ENCODE measurements at regions of chr2 and their contacts with region 1.

Region 1: DNA sequence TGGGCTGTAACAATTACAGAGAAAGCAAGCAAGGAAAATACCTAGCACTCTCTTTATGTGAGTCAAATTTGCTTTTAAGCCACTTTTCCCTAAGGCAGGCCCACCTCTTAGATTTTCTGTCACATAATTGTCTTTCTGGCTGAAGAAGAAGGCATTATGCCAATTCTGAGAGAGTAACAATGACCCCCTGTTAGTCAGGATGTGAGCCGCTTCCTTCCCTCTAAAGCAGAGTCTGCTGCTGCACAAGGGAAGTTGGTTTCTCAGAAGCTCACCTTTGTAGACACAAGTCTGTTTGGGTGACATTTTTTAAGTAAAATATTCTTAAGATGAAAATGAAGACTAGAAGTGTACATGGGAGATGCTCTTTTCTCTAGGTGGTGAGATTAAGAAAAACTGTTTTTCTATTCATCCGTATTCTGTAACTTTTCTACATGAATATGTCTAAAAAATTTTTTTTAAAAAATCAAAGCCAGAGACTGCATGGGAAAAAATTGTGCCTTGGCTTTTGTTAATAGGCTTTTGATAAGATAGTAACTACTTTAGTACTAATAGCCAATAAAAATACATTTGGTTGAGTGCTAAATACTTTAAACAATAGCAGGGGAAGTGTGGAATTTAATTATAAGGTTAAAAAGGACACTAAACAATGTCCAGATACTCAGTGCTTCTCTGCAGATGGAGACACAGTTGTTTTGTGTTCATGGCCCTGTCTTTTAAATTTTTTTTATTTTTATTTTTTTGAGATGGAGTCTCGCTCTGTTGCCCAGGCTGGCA is 33.4 kb upstream of the VPS54 start:
- DNase-seq: no peak
- ATAC-seq: peak; percentile 71 to 92
- H3K4me3 ChIP-seq: no peak overlapping the region
- H3K27ac ChIP-seq: no peak overlapping the region
- H3K4me1 ChIP-seq: no peaks in the 10 kb centered on the region
- H3K27me3 ChIP-seq: no peaks in the 10 kb centered on the region

Region 2: GRCh38 chr2:63772061-63772460 is 280.6 kb before region 1 on chr2:
- intact Hi-C with region 1: no loop called
- DNase-seq: no peak
- ATAC-seq: no peak
- H3K4me3 ChIP-seq: no peak overlapping the region
- H3K27ac ChIP-seq: no peak overlapping the region
- H3K4me1 ChIP-seq: no peaks in the 10 kb centered on the region
- H3K27me3 ChIP-seq: no peaks in the 10 kb centered on the region

Region 3: DNA sequence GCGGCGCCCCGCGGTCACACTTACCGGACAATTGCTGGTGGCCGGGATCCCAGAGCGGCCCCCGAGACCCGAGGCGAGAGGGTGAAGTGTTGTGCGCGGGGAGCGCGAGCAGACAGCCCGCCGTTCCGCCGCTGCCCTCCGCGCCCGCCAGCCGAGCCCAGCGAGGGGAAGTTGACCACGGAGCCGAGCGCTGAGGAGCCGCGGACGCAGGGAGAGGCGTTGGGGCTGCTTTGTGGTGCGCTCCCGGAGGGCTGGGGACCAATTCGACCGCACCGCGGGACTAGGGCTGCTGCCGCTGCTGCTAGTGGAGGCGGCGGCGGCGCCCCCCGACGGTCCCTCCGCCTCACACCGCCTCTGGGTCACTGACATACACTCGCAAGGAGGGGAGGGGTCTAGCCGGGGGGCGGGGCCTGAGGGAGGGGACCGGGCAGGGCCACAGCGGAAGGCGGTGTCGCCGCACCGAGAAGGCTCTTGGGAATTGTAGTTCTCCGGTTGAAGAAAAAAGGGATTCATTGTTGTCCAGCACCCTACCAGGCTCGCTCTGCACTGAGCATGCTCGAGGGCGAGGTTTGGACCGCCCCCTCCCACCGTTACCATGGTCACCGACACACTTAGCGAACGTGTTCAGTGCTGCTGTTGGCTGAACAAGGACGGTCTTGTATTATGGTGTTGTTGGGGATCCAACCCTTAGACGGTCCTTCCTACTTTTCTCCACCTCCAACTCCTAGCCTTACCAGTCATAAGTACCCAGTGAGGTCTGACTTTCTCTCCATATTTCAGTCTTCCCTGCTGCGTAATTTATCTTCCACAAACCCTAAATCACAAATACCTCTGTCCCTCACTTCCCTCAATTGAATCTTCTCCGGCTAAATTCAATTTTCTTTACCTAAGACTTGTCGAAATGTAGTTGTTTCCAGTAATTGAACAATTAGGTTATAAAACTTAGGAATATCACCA is 91.7 kb after region 1 on chr2 and contains the start of gene PELI1:
- intact Hi-C with region 1: loop called in 1 of 4 experiments (anchors 10 kb)
- DNase-seq: peak; percentile 96 to 99 (median 97)
- ATAC-seq: peak; percentile 99
- H3K4me3 ChIP-seq: peak within 1 kb of the TSS; percentile 81
- H3K27ac ChIP-seq: peak within 1 kb of the TSS; percentile 98
- H3K4me1 ChIP-seq: no peaks in the 10 kb centered on the region
- H3K27me3 ChIP-seq: no peaks in the 10 kb centered on the region
- total RNA-seq, gene PELI1: 12.4 to 17.2 (median 13.7) TPM

Region 4: DNA sequence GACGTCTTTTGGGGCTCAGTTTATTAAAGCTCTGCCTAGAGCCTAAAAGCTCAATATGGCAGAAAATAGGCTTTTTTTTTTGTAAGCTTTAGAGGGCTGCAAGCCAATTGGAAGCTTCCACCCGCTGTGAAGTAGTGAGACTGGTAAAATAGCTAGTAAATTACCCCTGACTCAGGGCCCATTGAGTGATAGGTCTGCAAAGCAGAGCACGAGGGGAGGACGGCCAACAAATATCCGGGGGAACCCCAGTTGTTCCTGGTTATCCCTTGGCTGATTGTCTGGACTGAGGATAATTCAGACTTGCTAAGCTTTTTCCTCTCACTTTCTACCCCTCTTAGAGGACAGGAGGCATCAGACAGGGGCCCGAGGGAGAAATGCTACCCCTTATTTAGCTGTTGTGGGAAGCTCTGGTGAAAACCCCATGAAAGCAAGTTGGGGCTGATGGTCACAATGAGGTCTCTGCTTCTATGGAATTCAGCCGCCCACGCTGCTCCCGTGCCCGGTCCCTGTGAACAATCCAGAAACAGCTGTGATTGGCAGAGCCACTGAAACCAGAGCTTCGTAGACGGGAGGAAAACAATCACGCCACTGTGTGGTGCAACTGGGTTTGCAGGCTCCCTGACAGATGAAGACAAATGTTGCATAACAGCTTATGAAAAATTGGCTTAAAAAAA is 259.4 kb after region 1 on chr2:
- intact Hi-C with region 1: loop called in 1 of 4 experiments (anchors 5 kb)
- DNase-seq: peak; percentile 82 to 92 (median 89)
- ATAC-seq: peak; percentile 94 to 96
- H3K4me3 ChIP-seq: no peak overlapping the region
- H3K27ac ChIP-seq: peak overlapping the region; percentile 15
- H3K4me1 ChIP-seq: peaks cover 3% of the 10 kb centered on the region
- H3K27me3 ChIP-seq: no peaks in the 10 kb centered on the region

Region 5: GRCh38 chr2:64488050-64488974 is 435.7 kb after region 1 on chr2:
- intact Hi-C with region 1: loop called in 2 of 4 experiments (anchors 5 to 10 kb)
- DNase-seq: peak; percentile 51 to 86 (median 84)
- ATAC-seq: peak; percentile 38 to 71
- H3K4me3 ChIP-seq: no peak overlapping the region
- H3K27ac ChIP-seq: no peak overlapping the region
- H3K4me1 ChIP-seq: no peaks in the 10 kb centered on the region
- H3K27me3 ChIP-seq: no peaks in the 10 kb centered on the region

Region 6: GRCh38 chr2:65040400-65041261 is 988.0 kb after region 1 on chr2:
- intact Hi-C with region 1: no loop called
- DNase-seq: peak; percentile 86 to 92 (median 90)
- ATAC-seq: peak; percentile 94 to 95
- H3K4me3 ChIP-seq: no peak overlapping the region
- H3K27ac ChIP-seq: no peak overlapping the region
- H3K4me1 ChIP-seq: no peaks in the 10 kb centered on the region
- H3K27me3 ChIP-seq: no peaks in the 10 kb centered on the region